CD4-positive, alpha-beta T cell (primary cell): ENCODE measurements at regions of chr2 and their contacts with region 1.

Region 1: GRCh38 chr2:10072656-10073480 is 7.3 kb downstream of the CYS1 start:
- DNase-seq: peak; percentile 61 to 91 (median 70)
- ATAC-seq: peak; percentile 98
- H3K4me3 ChIP-seq: no peak overlapping the region
- H3K4me3 Mint-ChIP-seq: no peak overlapping the region
- H3K27ac ChIP-seq: no peak overlapping the region
- H3K27ac Mint-ChIP-seq: no peak overlapping the region
- H3K4me1 ChIP-seq: peaks cover 5% of the 10 kb centered on the region
- H3K4me1 Mint-ChIP-seq: peaks cover 5% of the 10 kb centered on the region
- H3K27me3 ChIP-seq: peaks cover 20 to 36% of the 10 kb centered on the region in 2 experiments
- H3K27me3 Mint-ChIP-seq: peaks cover 47% of the 10 kb centered on the region
- CTCF ChIP-seq: peak; percentile 73

Region 2: DNA sequence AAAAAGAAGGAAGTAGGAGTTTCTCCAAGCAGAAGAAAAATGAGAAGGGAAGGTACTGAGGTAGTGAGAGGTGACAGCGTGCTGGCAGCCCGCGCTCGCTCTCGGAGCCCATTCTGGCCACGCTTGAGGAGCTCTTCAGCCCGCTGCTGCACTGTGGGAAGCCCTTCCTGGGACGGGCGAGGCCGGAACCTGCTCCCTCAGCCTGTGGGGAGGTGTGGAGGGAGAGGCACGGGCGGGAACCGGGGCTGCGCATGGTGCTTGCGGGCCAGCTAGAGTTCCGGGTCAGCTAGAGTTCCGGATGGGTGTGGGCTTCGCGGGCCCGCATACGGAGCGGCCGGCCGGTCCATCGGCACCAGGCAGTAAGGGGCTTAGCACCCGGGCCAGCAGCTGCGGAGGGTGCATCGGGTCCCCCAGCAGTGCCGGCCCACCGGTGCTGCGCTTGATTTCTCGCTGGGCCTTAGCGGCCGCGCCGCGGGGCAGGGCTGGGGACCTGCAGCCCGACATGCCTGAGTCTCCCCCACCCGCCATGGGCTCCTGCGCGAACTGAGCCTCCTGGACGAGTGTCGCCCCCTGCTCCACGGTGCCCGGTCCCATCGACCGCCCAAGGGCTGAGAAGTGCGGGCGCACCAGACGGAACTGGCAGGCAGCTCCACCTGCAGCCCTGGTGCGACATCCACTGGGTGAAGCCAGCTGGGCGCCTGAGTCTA is 18.5 kb after region 1 on chr2:
- CTCF ChIA-PET with region 1: interaction called, 43 read pairs
- POLR2A ChIA-PET with region 1: no interaction called
- intact Hi-C with region 1: no loop called
- DNase-seq: peak in 5 of 14 experiments; percentile 16 to 35 (median 22)
- ATAC-seq: peak; percentile 44
- H3K4me3 ChIP-seq: peak overlapping the region; percentile 16
- H3K4me3 Mint-ChIP-seq: peak overlapping the region; percentile 58
- H3K27ac ChIP-seq: no peak overlapping the region
- H3K27ac Mint-ChIP-seq: no peak overlapping the region
- H3K4me1 ChIP-seq: peaks cover 7% of the 10 kb centered on the region
- H3K4me1 Mint-ChIP-seq: peaks cover 14% of the 10 kb centered on the region
- H3K27me3 ChIP-seq: peaks cover 40 to 55% of the 10 kb centered on the region in 2 experiments
- H3K27me3 Mint-ChIP-seq: peaks cover 85% of the 10 kb centered on the region
- CTCF ChIP-seq: no peak

Region 3: GRCh38 chr2:10097352-10098148 is 24.7 kb after region 1 on chr2:
- CTCF ChIA-PET with region 1: interaction called, 43 read pairs
- POLR2A ChIA-PET with region 1: no interaction called
- intact Hi-C with region 1: loop called (anchors 1 kb)
- DNase-seq: peak in 8 of 14 experiments; percentile 6 to 66 (median 35)
- ATAC-seq: peak; percentile 75
- H3K4me3 ChIP-seq: no peak overlapping the region
- H3K4me3 Mint-ChIP-seq: no peak overlapping the region
- H3K27ac ChIP-seq: no peak overlapping the region
- H3K27ac Mint-ChIP-seq: no peak overlapping the region
- H3K4me1 ChIP-seq: peaks cover 3% of the 10 kb centered on the region
- H3K4me1 Mint-ChIP-seq: peaks cover 2% of the 10 kb centered on the region
- H3K27me3 ChIP-seq: peaks cover 13 to 16% of the 10 kb centered on the region in 2 experiments
- H3K27me3 Mint-ChIP-seq: peaks cover 51% of the 10 kb centered on the region
- CTCF ChIP-seq: peak; percentile 75

Region 4: GRCh38 chr2:10668402-10669012 is 595.6 kb after region 1 on chr2:
- CTCF ChIA-PET with region 1: no interaction called
- POLR2A ChIA-PET with region 1: no interaction called
- intact Hi-C with region 1: loop called in 1 of 2 experiments (anchors 2 kb)
- DNase-seq: peak in 5 of 14 experiments; percentile 14 to 82 (median 72)
- ATAC-seq: peak; percentile 71
- H3K4me3 ChIP-seq: no peak overlapping the region
- H3K4me3 Mint-ChIP-seq: no peak overlapping the region
- H3K27ac ChIP-seq: no peak overlapping the region
- H3K27ac Mint-ChIP-seq: no peak overlapping the region
- H3K4me1 ChIP-seq: no peaks in the 10 kb centered on the region
- H3K4me1 Mint-ChIP-seq: peaks cover 6% of the 10 kb centered on the region
- H3K27me3 ChIP-seq: no peaks in the 10 kb centered on the region
- H3K27me3 Mint-ChIP-seq: no peaks in the 10 kb centered on the region
- CTCF ChIP-seq: peak; percentile 89